ENCODE measurements at regions of chr4 and their contacts with region 1.

Region 1: GRCh38 chr4:144357975-144358374 is 217.5 kb upstream of the GYPA start:
- DNase-seq: no peak
- ATAC-seq: no peak
- H3K4me3 ChIP-seq: no peak overlapping the region
- H3K27ac ChIP-seq: no peak overlapping the region
- H3K4me1 ChIP-seq: peaks cover 0 to 14% (median 0%) of the 10 kb centered on the region in 9 donors
- H3K27me3 ChIP-seq: peaks cover 0 to 15% (median 6%) of the 10 kb centered on the region in 7 donors
- CTCF ChIP-seq: no peak

Region 2: DNA sequence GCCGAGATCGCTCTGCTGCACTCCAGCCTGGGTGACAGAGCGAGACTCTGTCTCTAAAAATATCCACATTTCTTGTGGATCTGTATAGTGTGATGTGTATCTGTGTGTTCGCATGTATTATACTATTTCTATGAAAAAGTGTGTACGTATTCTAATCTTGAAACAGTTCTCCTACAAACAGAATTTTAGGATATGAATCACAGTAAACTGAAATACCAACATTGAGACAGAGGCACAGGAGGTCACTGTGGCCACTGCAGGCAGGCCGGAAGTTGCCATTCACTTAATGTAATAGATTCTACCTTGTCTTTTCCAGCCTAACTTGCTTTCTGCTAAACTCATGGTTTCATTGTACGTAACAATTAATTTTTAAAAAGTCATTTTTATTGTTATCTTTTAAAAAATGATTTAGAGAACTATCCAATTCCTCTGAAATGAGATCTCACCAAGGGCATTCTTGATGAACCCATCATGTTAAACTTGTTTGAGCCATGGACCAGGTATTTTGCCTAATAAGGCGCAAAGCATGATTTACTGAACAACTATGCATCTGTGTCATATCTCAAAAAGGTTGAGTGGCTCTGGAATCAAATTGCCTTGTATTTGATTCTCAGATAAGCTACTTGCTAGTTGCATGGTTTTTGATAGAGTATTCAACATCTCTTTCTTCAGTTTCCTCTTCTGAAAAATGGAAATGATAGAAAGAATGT is 62.5 kb before region 1 on chr4:
- intact Hi-C with region 1: loop called in 1 of 10 experiments (anchors 2 kb)
- DNase-seq: no peak
- ATAC-seq: no peak
- H3K4me3 ChIP-seq: no peak overlapping the region
- H3K27ac ChIP-seq: no peak overlapping the region
- H3K4me1 ChIP-seq: no peaks in the 10 kb centered on the region
- H3K27me3 ChIP-seq: no peaks in the 10 kb centered on the region
- CTCF ChIP-seq: no peak

Region 3: GRCh38 chr4:144316869-144317268 is 41.1 kb before region 1 on chr4:
- intact Hi-C with region 1: no loop called
- DNase-seq: no peak
- ATAC-seq: no peak
- H3K4me3 ChIP-seq: no peak overlapping the region
- H3K27ac ChIP-seq: no peak overlapping the region
- H3K4me1 ChIP-seq: no peaks in the 10 kb centered on the region
- H3K27me3 ChIP-seq: no peaks in the 10 kb centered on the region
- CTCF ChIP-seq: no peak

Region 4: DNA sequence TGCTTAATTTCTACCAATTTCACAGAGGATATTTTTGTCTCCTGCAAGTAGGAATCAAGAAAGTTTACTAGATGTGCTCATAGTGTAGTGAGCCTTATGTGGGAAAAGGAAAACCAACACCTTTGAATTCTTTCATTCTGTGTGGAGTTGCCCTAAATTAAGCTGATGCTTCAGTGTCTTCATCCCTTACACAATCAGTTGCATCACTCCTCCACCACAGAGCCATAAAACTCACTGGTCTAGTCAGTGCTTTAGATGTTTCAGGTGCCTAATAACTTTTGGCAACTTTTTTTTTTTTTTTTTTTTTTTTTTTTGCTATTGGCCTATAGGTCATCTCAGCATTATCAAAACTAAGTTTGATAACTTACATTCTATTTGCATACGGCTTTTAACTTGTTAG is 329.5 kb after region 1 on chr4:
- intact Hi-C with region 1: no loop called
- DNase-seq: no peak
- ATAC-seq: no peak
- H3K4me3 ChIP-seq: no peak overlapping the region
- H3K27ac ChIP-seq: no peak overlapping the region
- H3K4me1 ChIP-seq: no peaks in the 10 kb centered on the region
- H3K27me3 ChIP-seq: no peaks in the 10 kb centered on the region
- CTCF ChIP-seq: no peak

Measured in heart right ventricle (tissue), 16 donors.